H1 (cell line): ENCODE measurements at regions of chr4 and their contacts with region 1.

Region 1: DNA sequence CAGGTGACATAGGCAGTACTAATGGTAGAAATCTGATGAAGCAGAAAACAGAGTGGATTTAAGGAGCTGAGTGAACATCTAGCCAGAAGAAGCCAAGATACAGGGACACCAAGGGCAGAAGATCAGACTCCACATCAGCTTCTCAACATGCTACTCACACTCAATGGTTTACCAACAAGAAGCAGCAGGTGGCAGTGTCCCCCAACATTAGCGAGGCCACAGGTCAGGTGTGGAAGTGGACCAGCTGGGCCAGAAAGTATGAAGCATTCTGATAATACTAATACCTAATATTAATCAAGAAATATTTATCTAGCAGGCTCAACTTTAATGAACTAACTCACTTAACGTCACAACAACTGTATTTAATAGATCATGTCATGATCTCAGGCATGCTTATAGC is 73.4 kb upstream of the TTC29 start:
- DNase-seq: peak in 1 of 2 experiments; percentile 77
- H3K4me3 ChIP-seq: no peak overlapping the region
- H3K27ac ChIP-seq: no peak overlapping the region
- H3K4me1 ChIP-seq: no peaks in the 10 kb centered on the region
- H3K27me3 ChIP-seq: no peaks in the 10 kb centered on the region
- CTCF ChIP-seq: peak; percentile 71 to 86 (median 84)
- EP300 ChIP-seq: no peak
- POLR2A ChIP-seq: no peak
- RAD21 ChIP-seq: peak; percentile 95 to 97

Region 2: GRCh38 chr4:147037069-147037468 is 18.0 kb after region 1 on chr4:
- CTCF ChIA-PET with region 1: interaction called, 31 read pairs
- POLR2A ChIA-PET with region 1: no interaction called
- DNase-seq: no peak
- H3K4me3 ChIP-seq: no peak overlapping the region
- H3K27ac ChIP-seq: no peak overlapping the region
- H3K4me1 ChIP-seq: no peaks in the 10 kb centered on the region
- H3K27me3 ChIP-seq: no peaks in the 10 kb centered on the region
- CTCF ChIP-seq: no peak
- EP300 ChIP-seq: no peak
- POLR2A ChIP-seq: no peak
- RAD21 ChIP-seq: no peak